ENCODE measurements at regions of chr1 and their contacts with region 1.

Region 1: DNA sequence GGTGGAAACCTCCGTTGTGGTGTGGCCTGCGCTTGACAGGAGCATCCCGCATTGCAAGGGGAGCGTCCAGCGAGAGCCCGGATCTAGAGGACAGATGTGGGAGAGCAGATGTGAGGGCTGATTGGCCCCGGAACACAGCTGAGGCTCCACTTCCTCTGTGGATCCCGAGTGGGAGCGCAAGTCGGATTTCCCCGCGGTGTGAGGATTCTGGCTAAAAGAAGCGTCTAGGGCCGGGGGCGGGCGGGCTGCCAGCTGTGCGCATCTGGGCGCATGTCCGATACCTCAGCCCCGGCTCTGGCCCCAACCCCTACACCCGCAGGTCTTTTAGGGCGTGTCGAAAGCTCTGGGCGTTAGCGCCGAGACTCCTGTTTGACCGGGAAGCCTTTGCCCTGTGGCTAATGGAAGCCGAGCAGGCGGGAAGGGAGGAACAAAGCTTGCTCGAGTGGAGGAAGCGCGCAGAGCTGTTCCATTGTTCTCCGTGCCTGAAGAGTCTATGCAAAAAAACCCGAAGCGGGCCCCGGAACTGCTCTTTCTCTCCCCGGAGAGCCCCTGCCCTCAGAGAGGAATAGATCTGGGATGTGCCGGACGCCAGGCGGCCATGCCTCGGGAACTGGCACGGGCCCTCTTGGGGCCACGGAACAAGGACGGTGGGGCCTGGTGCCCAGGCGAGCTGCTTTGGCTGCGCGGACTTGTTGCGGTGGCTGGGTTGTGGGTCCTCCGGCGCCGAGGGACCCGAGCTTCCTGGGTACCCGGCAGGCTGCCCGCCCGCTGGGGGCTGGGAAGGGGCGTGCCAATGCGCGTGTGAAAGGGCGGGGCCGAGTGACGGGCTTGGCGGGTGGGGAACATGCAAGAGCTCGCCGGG is 111.1 kb downstream of the NAV1 start:
- DNase-seq: peak; percentile 47 to 90
- H3K4me3 ChIP-seq: peak overlapping the region; percentile 67 to 83 (median 70)
- H3K27ac ChIP-seq: no peak overlapping the region
- H3K4me1 ChIP-seq: peaks cover 13 to 33% (median 25%) of the 10 kb centered on the region in 4 experiments
- H3K27me3 ChIP-seq: peaks cover 0 to 22% (median 19%) of the 10 kb centered on the region in 4 experiments; a peak in 5 of 7 replicates
- CTCF ChIP-seq: no peak
- EP300 ChIP-seq: no peak
- POLR2A ChIP-seq: 0 out of 3 replicates have a peak, but pooled peaks of 1 of the 2 experiments have one; percentile 29
- RAD21 ChIP-seq: no peak

Region 2: GRCh38 chr1:201660931-201661822 is 11.2 kb after region 1 on chr1:
- CTCF ChIA-PET with region 1: interaction called, 18 read pairs
- POLR2A ChIA-PET with region 1: interaction called, 8 read pairs
- DNase-seq: no peak
- H3K4me3 ChIP-seq: no peak overlapping the region
- H3K27ac ChIP-seq: no peak overlapping the region
- H3K4me1 ChIP-seq: no peaks in the 10 kb centered on the region; a peak in 1 of 7 replicates
- H3K27me3 ChIP-seq: no peaks in the 10 kb centered on the region
- CTCF ChIP-seq: no peak
- EP300 ChIP-seq: no peak
- POLR2A ChIP-seq: no peak
- RAD21 ChIP-seq: no peak

Region 3: DNA sequence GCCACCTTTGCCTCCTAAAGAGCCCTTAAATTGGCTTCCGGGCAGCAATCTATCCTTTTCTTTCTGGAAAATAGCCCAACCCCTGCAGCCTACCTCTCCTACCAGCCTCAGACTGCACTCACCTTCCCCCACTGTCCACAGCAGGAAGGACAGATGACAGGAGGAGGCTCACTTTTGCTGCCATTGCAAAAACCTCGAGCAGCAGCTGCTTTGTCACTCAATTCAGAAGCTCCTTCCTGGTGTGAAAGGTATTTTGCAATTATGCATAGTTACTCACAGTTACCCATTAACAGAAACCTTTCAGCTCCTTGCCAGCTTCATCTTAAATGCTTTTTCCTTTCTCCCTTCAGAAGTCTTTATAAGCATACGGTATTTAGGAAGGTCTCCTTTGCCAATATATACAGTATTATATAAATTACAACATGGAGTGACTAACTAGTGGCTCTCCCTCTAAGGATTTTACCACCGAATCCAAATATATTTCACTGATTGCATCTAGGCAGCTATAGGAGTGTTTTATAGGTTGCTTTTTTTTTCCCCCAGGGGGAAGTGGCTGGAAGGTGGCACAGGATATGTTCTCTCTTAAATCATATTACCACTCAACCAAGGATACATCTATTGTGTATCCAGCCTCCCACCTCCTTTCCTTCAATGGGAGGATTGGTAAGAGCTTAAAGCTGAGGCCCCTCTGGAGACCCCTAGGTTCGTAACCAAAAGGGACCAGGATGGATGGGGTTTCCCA is 36.9 kb after region 1 on chr1:
- CTCF ChIA-PET with region 1: interaction called, 14 read pairs
- POLR2A ChIA-PET with region 1: interaction called, 8 read pairs
- DNase-seq: no peak
- H3K4me3 ChIP-seq: peak overlapping the region in 2 of 4 experiments; percentile 2 to 27; a peak in 3 of 8 replicates
- H3K27ac ChIP-seq: no peak overlapping the region
- H3K4me1 ChIP-seq: peaks cover 13 to 31% (median 23%) of the 10 kb centered on the region in 4 experiments
- H3K27me3 ChIP-seq: no peaks in the 10 kb centered on the region
- CTCF ChIP-seq: no peak
- EP300 ChIP-seq: no peak; a peak in 1 of 3 replicates
- POLR2A ChIP-seq: no peak
- RAD21 ChIP-seq: 0 out of 4 replicates have a peak, but pooled peaks of 1 of the 2 experiments have one; percentile 1